Heart left ventricle (tissue), 16 donors: ENCODE measurements at regions of chr17 and their contacts with region 1.

Region 1: GRCh38 chr17:1783834-1784611 is 22.2 kb downstream of the SERPINF1 start:
- DNase-seq: peak in 4 of 5 donors; percentile 75 to 91 (median 82)
- ATAC-seq: peak; percentile 74 to 86 (median 80)
- H3K4me3 ChIP-seq: peak overlapping the region in 8 of 12 donors; percentile 12 to 43 (median 20)
- H3K27ac ChIP-seq: peak overlapping the region; percentile 83 to 97 (median 92)
- H3K4me1 ChIP-seq: peaks cover 5 to 89% (median 60%) of the 10 kb centered on the region in 12 donors
- H3K27me3 ChIP-seq: no peaks in the 10 kb centered on the region
- CTCF ChIP-seq: peak; percentile 45 to 81 (median 72)
- POLR2A ChIP-seq: peak in 1 of 2 donors; percentile 69

Region 2: GRCh38 chr17:1752425-1753262 is 31.4 kb before region 1 on chr17:
- intact Hi-C with region 1: no loop called
- DNase-seq: peak in 1 of 5 donors; percentile 72
- ATAC-seq: peak; percentile 53 to 78 (median 64)
- H3K4me3 ChIP-seq: peak overlapping the region in 1 of 12 donors; percentile 36
- H3K27ac ChIP-seq: peak overlapping the region in 4 of 12 donors; percentile 5 to 87 (median 19)
- H3K4me1 ChIP-seq: peaks cover 0 to 22% (median 0%) of the 10 kb centered on the region in 12 donors
- H3K27me3 ChIP-seq: no peaks in the 10 kb centered on the region
- CTCF ChIP-seq: no peak
- POLR2A ChIP-seq: no peak

Region 3: DNA sequence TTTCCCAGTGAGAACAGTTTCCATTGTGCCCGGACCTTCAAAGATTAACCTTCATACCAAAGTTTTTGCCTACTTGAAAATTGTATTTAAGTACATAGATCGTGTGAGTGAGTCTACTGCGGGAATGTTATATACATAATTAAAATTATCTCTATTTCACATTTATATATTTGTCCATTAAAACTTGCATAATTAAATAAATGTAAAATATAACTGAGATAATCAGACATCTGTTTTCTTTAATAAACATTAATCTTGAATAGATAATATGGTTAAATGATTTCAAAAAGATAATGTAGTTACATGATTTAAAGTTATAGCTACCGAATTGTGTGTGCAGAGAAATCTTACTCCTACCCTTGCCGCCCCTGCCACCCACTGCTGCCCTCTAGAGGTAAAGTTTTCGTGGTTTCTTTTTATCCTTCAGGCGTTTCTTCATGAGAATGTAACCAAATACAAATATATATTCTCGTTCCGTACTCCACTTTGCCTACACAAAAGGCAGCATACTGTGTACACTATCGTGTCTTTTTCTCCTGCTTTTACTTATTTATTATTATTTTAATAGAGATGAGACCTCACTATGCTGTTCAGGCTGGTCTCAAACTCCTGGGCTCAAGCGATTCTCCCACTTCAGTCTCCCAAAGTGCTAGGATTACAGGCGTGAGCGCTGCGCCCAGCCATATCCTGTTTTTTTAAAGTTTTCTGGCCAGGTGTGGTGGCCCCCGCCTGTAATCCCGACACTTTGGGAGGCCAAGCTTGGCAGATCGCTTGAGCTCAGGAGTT is 81.4 kb after region 1 on chr17:
- intact Hi-C with region 1: loop called in 1 of 10 experiments (anchors 5 kb)
- DNase-seq: no peak
- ATAC-seq: peak in 2 of 4 donors; percentile 41 to 51
- H3K4me3 ChIP-seq: no peak overlapping the region
- H3K27ac ChIP-seq: no peak overlapping the region
- H3K4me1 ChIP-seq: no peaks in the 10 kb centered on the region
- H3K27me3 ChIP-seq: no peaks in the 10 kb centered on the region
- CTCF ChIP-seq: peak; percentile 49 to 73 (median 66)
- POLR2A ChIP-seq: no peak